A673 (cell line): ENCODE measurements at regions of chr5 and their contacts with region 1.

Region 1: DNA sequence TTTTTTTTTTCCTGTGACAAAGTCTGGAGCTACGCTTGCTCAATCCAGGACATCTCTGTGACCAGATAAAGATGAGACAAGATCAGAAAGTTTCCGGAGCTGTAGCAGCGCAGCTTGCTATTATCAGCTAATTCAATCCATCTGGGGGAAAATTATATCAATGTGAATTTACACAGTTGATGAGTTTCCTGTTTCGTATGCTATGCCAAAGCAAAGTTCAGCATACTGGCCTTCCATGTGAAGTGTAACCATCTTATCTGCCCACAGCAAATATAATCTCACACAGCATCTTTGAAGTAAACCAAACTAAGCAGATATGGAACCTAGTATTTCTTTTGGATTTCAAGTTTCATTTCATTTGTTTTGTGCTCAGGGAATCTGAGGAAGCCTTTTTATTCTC is 1767.7 kb downstream of the EFNA5 start:
- DNase-seq: peak; percentile 94
- H3K4me3 ChIP-seq: peak overlapping the region; percentile 16
- H3K27ac ChIP-seq: peak overlapping the region; percentile 63
- H3K4me1 ChIP-seq: peaks cover 65% of the 10 kb centered on the region
- H3K27me3 ChIP-seq: no peaks in the 10 kb centered on the region
- CTCF ChIP-seq: no peak

Region 2: DNA sequence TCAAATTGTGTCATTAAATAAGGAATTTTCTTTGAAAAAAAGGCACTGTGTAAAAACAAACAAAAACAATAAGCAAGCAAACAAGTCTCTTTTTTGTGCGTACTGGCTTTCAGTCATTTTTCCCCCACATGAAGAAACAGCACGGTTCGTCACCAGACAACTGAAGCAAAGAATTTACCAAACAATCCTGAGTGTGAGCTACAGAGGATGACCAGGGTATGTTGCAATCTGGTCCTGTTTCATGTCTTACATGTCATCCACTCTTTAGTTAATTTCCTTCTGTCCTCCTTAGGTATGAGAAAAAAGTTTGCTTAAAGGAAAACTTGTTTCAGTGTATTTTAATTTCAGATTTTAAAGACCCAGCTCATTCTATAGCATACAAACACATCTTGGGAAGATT is 1259.7 kb before region 1 on chr5:
- CTCF ChIA-PET with region 1: no interaction called
- POLR2A ChIA-PET with region 1: no interaction called
- intact Hi-C with region 1: loop called (anchors 10 kb)
- DNase-seq: peak; percentile 91
- H3K4me3 ChIP-seq: peak overlapping the region; percentile 11
- H3K27ac ChIP-seq: peak overlapping the region; percentile 95
- H3K4me1 ChIP-seq: peaks cover 63% of the 10 kb centered on the region
- H3K27me3 ChIP-seq: no peaks in the 10 kb centered on the region
- CTCF ChIP-seq: no peak

Region 3: GRCh38 chr5:105836268-105836667 is 66.8 kb before region 1 on chr5:
- CTCF ChIA-PET with region 1: no interaction called
- POLR2A ChIA-PET with region 1: no interaction called
- intact Hi-C with region 1: no loop called
- DNase-seq: no peak
- H3K4me3 ChIP-seq: no peak overlapping the region
- H3K27ac ChIP-seq: no peak overlapping the region
- H3K4me1 ChIP-seq: no peaks in the 10 kb centered on the region
- H3K27me3 ChIP-seq: no peaks in the 10 kb centered on the region
- CTCF ChIP-seq: no peak